ENCODE measurements at regions of chr4 and their contacts with region 1.

Region 1: DNA sequence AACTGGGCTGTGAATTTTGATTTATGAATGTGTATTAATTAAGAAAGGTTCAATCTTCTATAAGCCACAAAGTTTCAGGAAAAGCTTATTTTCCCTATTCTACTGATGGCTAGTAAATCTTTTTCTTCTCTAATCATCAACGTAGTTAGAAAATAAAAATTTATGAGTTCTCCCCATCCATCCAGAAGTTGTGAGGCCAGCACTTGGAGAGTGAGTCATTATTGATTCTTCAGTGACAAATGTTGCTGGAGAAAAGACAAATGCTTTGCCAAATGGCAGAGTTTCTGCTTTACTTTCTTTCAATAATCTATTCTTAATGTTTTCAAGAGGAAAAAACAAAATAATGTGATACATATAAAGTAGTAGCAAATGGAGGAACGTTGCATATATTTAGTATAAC is 11.3 kb upstream of the GRXCR1 start:
- DNase-seq: no peak
- ATAC-seq: no peak
- H3K4me3 ChIP-seq: no peak overlapping the region
- H3K27ac ChIP-seq: no peak overlapping the region
- H3K4me1 ChIP-seq: no peaks in the 10 kb centered on the region
- H3K27me3 ChIP-seq: no peaks in the 10 kb centered on the region
- CTCF ChIP-seq: no peak

Region 2: DNA sequence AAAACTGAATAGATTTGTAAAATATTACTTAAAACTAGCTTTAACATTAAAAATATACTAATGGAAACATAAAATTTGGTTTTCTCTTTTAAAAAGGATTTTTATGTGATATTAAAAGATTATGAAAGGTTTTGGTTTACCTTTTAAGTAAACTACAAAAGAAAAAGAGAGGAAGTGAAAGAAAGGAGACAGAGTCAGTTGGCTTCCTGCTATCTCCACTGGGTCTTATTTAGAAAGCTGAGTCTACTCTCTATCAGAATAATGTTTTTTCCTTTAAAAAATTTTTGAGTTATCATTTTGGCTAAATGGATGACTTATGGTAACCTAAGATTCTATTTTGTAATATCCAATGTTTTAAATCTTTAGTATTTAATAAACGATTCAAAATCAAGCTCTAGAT is 202.7 kb before region 1 on chr4:
- CTCF ChIA-PET with region 1: no interaction called
- POLR2A ChIA-PET with region 1: no interaction called
- in situ Hi-C with region 1: no loop called
- intact Hi-C with region 1: no loop called
- DNase-seq: no peak
- ATAC-seq: no peak
- H3K4me3 ChIP-seq: no peak overlapping the region
- H3K27ac ChIP-seq: no peak overlapping the region
- H3K4me1 ChIP-seq: no peaks in the 10 kb centered on the region
- H3K27me3 ChIP-seq: no peaks in the 10 kb centered on the region
- CTCF ChIP-seq: no peak

Region 3: DNA sequence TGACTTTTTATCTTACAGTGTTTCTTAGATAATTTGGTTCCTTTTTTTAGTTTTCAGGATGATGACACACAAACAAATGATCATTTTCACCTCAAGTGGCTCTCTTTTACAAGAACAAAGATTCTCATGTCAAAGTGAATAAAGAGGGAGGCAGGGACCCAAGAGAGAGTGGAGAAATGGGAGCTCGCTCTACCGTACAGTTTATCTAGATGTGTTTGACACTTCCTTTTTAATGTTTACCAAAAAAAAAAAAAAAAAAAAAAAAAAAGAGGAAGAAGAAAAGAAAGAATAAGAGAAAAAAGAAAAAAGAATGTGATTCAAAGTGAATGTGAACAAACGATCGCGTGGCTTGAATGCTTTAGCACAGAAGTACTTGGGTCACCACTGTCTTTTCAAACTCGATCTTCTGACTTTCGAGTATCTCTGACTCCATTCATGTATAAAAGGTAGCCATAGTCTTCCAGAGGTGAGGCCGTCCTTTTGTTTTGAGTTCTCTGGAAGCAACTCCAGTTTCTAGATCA is 64.3 kb before region 1 on chr4:
- CTCF ChIA-PET with region 1: no interaction called
- POLR2A ChIA-PET with region 1: no interaction called
- in situ Hi-C with region 1: no loop called
- intact Hi-C with region 1: no loop called
- DNase-seq: no peak
- ATAC-seq: no peak
- H3K4me3 ChIP-seq: no peak overlapping the region
- H3K27ac ChIP-seq: no peak overlapping the region
- H3K4me1 ChIP-seq: no peaks in the 10 kb centered on the region
- H3K27me3 ChIP-seq: no peaks in the 10 kb centered on the region
- CTCF ChIP-seq: no peak

Region 4: DNA sequence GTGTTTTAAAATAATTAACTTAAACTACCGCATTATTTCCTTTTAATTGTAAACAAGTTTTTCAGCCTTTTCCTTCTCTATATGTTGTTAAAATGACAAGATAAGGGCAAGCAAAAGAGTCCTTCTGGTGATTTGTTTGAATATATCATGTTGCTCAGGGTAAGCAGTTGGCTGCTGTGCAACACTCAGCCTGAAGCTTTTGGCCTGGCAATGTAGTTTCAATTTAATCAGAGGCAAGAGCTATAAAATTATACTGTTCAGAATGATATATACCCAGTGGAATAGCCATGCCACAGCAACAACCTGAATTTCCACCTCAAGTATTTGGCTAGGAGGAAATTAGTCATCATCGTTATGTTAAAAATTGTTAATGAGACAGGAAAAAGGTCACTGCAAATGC is 64.6 kb after region 1 on chr4:
- CTCF ChIA-PET with region 1: no interaction called
- POLR2A ChIA-PET with region 1: no interaction called
- in situ Hi-C with region 1: no loop called
- intact Hi-C with region 1: loop called (anchors 10 kb)
- DNase-seq: no peak
- ATAC-seq: no peak
- H3K4me3 ChIP-seq: no peak overlapping the region
- H3K27ac ChIP-seq: no peak overlapping the region
- H3K4me1 ChIP-seq: no peaks in the 10 kb centered on the region
- H3K27me3 ChIP-seq: no peaks in the 10 kb centered on the region
- CTCF ChIP-seq: no peak

Measured in Panc1 (cell line).